ENCODE measurements at regions of chr1 and their contacts with region 1.

Region 1: GRCh38 chr1:23743287-23744052 is at the start of gene ELOA:
- DNase-seq: peak; percentile 80 to 89
- ATAC-seq: peak; percentile 92 to 93 (median 92)
- H3K4me3 ChIP-seq: peak within 1 kb of the TSS; percentile 91
- H3K27ac ChIP-seq: peak within 1 kb of the TSS; percentile 91
- H3K4me1 ChIP-seq: peaks cover 38% of the 10 kb centered on the region
- H3K27me3 ChIP-seq: no peaks in the 10 kb centered on the region
- CTCF ChIP-seq: no peak
- total RNA-seq, gene ELOA: 41.4 to 68.9 (median 52.3) TPM

Region 2: DNA sequence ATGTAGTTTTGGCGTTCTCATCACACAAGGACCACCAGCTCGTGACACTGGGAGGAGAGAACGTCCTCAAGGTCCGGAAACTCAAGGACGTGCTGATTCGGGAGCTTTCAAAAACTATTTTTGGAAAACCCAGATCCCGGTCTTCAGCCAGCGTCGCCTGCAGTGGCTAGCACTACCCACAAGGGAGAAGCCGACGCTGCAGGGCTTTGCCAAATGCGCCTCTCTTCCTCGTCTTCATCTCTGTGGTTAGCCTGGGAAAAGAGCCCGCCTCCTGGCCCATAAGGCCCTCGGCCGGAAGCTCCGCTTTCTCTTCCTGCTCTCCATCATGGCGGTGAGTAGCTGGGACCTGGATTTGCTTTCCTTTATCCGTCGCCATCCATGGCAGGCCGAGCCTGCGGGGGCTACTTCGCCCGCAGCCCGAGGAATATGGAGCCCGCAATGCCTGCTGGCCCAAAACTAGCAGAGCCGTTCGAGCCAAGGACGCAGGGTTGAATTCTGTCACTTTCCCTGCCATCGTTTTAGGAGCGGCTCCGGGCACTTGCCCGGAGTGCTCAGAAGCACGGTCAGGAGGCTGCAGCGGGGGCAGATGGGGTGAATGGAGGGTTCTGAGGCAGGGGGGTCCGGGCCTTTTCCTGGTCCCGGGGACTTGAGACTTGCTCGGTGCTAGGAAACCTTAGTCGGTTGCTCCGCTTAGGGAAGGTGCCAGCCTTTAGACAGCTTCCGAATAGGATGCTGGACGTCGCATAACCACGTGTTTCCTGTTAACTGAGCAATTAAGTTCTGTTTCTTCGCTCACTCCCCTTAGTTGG is 51.8 kb before region 1 on chr1 and contains the start of gene RPL11:
- intact Hi-C with region 1: loop called (anchors 2 to 10 kb)
- DNase-seq: peak; percentile 90 to 96
- ATAC-seq: peak; percentile 98 to 99 (median 99)
- H3K4me3 ChIP-seq: peak within 1 kb of the TSS; percentile 88
- H3K27ac ChIP-seq: peak within 1 kb of the TSS; percentile 90
- H3K4me1 ChIP-seq: peaks cover 43% of the 10 kb centered on the region
- H3K27me3 ChIP-seq: no peaks in the 10 kb centered on the region
- CTCF ChIP-seq: peak; percentile 83
- total RNA-seq, gene RPL11: 486 to 688 (median 592) TPM

Measured in psoas muscle (tissue), 8 donors.